RWPE1 (cell line): ENCODE measurements at regions of chr2 and their contacts with region 1.

Region 1: DNA sequence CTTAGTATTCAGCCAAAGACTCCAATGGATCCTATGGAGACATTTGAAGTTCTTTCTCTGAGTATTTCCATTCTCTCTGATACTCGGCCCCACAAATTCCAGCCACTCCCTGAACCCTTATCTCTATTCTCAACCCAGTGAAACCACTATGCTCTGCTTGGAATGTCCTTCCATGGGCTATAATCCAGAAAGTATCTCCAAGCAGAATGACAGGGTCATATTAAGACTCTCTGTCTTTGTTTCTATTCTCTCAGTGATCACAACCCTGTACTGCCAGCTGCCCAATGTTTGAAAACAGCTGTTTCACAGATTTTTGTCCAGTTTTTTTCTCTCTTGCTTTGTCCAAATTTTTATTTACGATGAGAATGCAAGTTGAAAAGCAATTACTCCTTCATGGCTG is 21.9 kb downstream of the CHMP3 start:
- DNase-seq: no peak
- H3K27ac ChIP-seq: no peak overlapping the region
- CTCF ChIP-seq: no peak

Region 2: DNA sequence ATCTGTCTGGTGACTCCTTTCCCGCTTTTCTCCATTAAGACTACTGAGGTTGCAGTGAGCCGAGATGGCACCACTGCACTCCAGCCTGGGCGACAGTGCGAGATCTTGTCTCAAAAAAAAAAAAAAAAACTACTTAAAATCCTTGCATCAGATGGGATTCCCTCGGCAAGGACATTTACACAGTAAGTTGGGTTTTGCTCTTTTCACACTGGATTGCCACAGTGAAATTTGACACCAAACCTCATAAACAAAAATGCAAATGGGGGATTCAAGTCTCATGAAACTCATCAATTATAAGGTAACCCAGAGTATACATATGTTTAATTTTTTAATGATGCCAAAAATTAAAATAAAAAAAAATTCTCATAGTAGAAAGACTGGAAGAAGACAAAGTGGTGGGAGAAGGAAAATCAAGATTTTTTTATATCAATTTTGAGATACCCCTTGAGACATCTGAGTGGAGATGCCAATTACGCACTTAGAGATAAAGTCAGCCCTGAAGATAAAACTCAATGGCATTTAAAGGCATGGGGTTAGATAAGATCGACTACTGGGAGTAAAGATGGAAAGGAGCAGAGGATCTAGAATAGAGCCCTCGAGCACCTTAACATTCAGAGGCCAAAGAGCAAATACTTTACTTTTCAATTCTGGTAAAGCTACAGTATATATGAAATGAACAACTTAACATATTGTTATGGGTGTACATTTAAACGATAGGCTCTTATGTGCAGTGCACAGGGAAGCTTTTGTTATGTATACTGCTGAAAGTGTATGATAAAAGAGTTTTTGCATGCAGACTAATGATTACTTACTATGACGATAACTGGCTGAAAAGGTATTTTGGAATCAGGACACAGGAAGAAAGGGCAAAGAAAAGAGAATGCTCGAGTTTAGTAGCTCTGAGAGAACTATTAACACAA is 15.7 kb before region 1 on chr2:
- CTCF ChIA-PET with region 1: interaction called, 10 read pairs
- POLR2A ChIA-PET with region 1: no interaction called
- DNase-seq: no peak
- H3K27ac ChIP-seq: no peak overlapping the region
- CTCF ChIP-seq: no peak